Vagina (tissue), 2 donors: ENCODE measurements at regions of chr12 and their contacts with region 1.

Region 1: DNA sequence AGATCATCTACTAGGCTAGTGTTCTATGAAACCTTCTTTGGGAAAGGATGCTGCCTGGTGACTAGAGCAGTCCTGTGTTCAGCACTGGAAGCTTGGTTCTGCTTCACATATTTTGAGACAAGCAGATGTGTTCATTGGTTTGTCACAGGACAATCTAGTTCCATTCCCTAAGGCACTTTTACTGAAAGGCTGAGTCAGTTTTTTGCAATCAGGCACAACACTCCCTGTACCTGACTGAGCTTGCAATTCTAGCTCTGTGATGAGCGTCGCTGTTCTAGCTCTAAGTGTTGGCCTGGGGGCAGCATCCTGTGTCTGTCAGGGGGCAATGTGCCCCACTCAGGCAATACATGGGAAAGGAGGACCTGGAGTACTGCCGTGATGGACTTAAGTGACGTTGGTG is 144.4 kb downstream of the CAND1 start:
- DNase-seq: no peak
- H3K4me3 ChIP-seq: no peak overlapping the region
- H3K27ac ChIP-seq: no peak overlapping the region
- H3K4me1 ChIP-seq: no peaks in the 10 kb centered on the region
- H3K27me3 ChIP-seq: no peaks in the 10 kb centered on the region
- CTCF ChIP-seq: no peak
- POLR2A ChIP-seq: no peak

Region 2: GRCh38 chr12:68915055-68915454 is 1501.5 kb after region 1 on chr12:
- intact Hi-C with region 1: loop called (anchors 5 kb)
- DNase-seq: no peak
- H3K4me3 ChIP-seq: no peak overlapping the region
- H3K27ac ChIP-seq: peak overlapping the region; percentile 45
- H3K4me1 ChIP-seq: peaks cover 5% of the 10 kb centered on the region
- H3K27me3 ChIP-seq: no peaks in the 10 kb centered on the region
- CTCF ChIP-seq: no peak
- POLR2A ChIP-seq: no peak